Naive thymus-derived CD4-positive, alpha-beta T cell (primary cell): ENCODE measurements at regions of chr6 and their contacts with region 1.

Region 1: DNA sequence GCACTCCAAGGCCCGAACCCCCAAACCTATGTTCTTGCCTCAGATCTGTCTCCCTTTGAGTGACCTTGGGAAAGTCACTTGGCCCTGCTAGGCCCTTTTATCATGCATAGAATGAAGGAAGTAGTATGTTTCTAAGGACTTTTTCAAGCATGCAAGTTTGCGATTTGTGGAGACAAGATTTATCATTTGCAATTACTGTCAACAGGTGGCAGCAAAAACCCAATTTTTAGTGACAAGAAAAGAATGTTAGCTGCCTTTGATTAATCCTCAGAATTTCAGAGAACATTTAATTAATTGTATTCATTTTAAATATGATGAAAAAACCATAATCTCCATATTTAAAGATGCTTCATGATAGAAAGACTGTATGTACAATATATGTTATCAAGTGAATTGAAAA is 28.3 kb upstream of the PREP start:
- DNase-seq: peak in 6 of 9 donors; percentile 4 to 43 (median 34)
- ATAC-seq: no peak
- H3K4me3 ChIP-seq: no peak overlapping the region
- H3K4me3 Mint-ChIP-seq: no peak overlapping the region
- H3K27ac ChIP-seq: no peak overlapping the region
- H3K27ac Mint-ChIP-seq: no peak overlapping the region
- H3K4me1 ChIP-seq: no peaks in the 10 kb centered on the region
- H3K4me1 Mint-ChIP-seq: peaks cover 0 to 3% (median 0%) of the 10 kb centered on the region in 7 donors
- H3K27me3 ChIP-seq: no peaks in the 10 kb centered on the region
- H3K27me3 Mint-ChIP-seq: peaks cover 0 to 36% (median 7%) of the 10 kb centered on the region in 5 donors

Region 2: GRCh38 chr6:104527761-104528415 is 903.3 kb before region 1 on chr6:
- CTCF ChIA-PET with region 1: no interaction called
- POLR2A ChIA-PET with region 1: no interaction called
- intact Hi-C with region 1: no loop called
- DNase-seq: no peak
- ATAC-seq: no peak
- H3K4me3 ChIP-seq: no peak overlapping the region
- H3K4me3 Mint-ChIP-seq: no peak overlapping the region
- H3K27ac ChIP-seq: no peak overlapping the region
- H3K27ac Mint-ChIP-seq: no peak overlapping the region
- H3K4me1 ChIP-seq: no peaks in the 10 kb centered on the region
- H3K4me1 Mint-ChIP-seq: peaks cover 0 to 6% (median 0%) of the 10 kb centered on the region in 7 donors
- H3K27me3 ChIP-seq: no peaks in the 10 kb centered on the region
- H3K27me3 Mint-ChIP-seq: peaks cover 0 to 22% (median 18%) of the 10 kb centered on the region in 5 donors

Region 3: GRCh38 chr6:105667056-105667455 is 235.8 kb after region 1 on chr6:
- CTCF ChIA-PET with region 1: no interaction called
- POLR2A ChIA-PET with region 1: no interaction called
- intact Hi-C with region 1: no loop called
- DNase-seq: no peak
- ATAC-seq: no peak
- H3K4me3 ChIP-seq: no peak overlapping the region
- H3K4me3 Mint-ChIP-seq: no peak overlapping the region
- H3K27ac ChIP-seq: no peak overlapping the region
- H3K27ac Mint-ChIP-seq: no peak overlapping the region
- H3K4me1 ChIP-seq: no peaks in the 10 kb centered on the region
- H3K4me1 Mint-ChIP-seq: peaks cover 0 to 3% (median 0%) of the 10 kb centered on the region in 7 donors
- H3K27me3 ChIP-seq: no peaks in the 10 kb centered on the region
- H3K27me3 Mint-ChIP-seq: peaks cover 15 to 31% (median 27%) of the 10 kb centered on the region in 5 donors

Region 4: DNA sequence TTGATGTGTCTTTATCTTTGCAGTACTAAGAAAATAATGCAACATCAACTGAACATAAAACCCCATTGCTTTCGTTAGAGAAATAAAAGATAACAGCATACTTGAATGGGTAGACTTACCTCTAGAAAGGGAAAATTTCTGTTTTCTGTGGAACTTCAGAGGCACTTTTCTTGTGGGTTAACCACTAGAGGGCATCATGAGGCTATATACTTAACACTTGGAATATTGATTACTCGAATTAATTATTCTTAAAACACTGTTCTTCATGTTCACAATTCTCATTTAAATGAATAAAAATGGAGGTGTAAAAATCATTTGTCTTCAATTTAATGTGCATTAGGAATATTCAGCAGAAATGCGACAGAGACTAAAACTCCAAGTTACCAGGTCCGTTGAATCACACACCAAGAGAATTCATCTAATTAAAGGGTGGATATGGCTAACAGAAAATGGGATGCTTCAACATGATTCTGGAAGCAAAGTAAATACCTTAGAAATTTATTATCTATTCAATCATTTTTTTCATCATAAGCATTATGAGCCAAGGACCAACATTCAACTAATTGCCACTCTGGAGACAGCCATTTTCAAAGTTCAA is 302.4 kb after region 1 on chr6:
- CTCF ChIA-PET with region 1: no interaction called
- POLR2A ChIA-PET with region 1: no interaction called
- intact Hi-C with region 1: loop called (anchors 5 kb)
- DNase-seq: peak in 6 of 9 donors; percentile 10 to 41 (median 34)
- ATAC-seq: no peak
- H3K4me3 ChIP-seq: no peak overlapping the region
- H3K4me3 Mint-ChIP-seq: no peak overlapping the region
- H3K27ac ChIP-seq: no peak overlapping the region
- H3K27ac Mint-ChIP-seq: no peak overlapping the region
- H3K4me1 ChIP-seq: no peaks in the 10 kb centered on the region
- H3K4me1 Mint-ChIP-seq: peaks cover 0 to 36% (median 8%) of the 10 kb centered on the region in 7 donors
- H3K27me3 ChIP-seq: no peaks in the 10 kb centered on the region
- H3K27me3 Mint-ChIP-seq: peaks cover 0 to 8% (median 0%) of the 10 kb centered on the region in 5 donors

Region 5: GRCh38 chr6:106439446-106439845 is 1008.2 kb after region 1 on chr6:
- CTCF ChIA-PET with region 1: interaction called, 3 read pairs
- POLR2A ChIA-PET with region 1: no interaction called
- intact Hi-C with region 1: loop called (anchors 2 to 5 kb)
- DNase-seq: no peak
- ATAC-seq: no peak
- H3K4me3 ChIP-seq: no peak overlapping the region
- H3K4me3 Mint-ChIP-seq: no peak overlapping the region
- H3K27ac ChIP-seq: no peak overlapping the region
- H3K27ac Mint-ChIP-seq: no peak overlapping the region
- H3K4me1 ChIP-seq: no peaks in the 10 kb centered on the region
- H3K4me1 Mint-ChIP-seq: peaks cover 0 to 4% (median 0%) of the 10 kb centered on the region in 7 donors
- H3K27me3 ChIP-seq: peaks cover 4% of the 10 kb centered on the region in 2 donors
- H3K27me3 Mint-ChIP-seq: peaks cover 24 to 55% (median 38%) of the 10 kb centered on the region in 5 donors